CD4-positive, alpha-beta memory T cell (primary cell): ENCODE measurements at regions of chr6 and their contacts with region 1.

Region 1: DNA sequence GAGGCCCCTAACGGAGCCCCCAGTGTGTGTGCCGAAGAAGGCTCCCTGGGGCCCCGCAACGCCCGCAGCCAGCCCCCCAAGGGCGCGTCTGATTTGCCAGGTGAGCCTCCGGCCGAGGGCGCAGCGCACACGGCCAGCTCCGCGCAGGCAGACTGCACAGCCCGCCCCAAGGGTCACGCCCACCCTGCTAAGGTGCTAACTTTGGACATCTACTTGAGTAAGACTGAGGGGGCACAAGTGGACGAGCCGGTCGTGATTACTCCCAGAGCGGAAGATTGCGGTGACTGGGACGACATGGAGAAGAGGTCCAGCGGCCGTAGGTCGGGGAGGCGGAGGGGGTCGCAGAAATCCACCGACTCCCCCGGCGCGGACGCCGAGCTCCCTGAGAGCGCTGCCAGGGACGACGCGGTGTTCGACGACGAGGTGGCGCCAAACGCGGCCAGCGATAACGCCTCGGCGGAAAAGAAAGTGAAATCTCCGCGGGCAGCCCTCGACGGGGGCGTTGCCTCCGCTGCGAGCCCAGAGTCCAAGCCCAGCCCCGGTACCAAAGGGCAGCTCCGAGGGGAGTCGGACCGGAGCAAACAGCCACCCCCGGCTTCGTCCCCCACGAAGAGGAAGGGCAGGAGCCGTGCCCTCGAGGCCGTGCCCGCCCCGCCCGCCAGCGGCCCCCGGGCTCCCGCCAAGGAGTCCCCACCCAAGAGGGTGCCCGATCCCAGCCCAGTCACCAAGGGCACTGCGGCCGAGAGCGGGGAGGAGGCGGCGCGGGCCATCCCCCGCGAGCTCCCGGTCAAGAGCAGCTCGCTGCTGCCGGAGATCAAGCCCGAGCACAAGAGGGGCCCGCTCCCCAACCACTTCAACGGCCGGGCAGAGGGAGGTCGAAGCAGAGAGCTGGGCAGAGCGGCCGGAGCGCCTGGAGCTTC is 117.0 kb downstream of the RTN4IP1 start:
- DNase-seq: peak; percentile 77 to 84 (median 80)
- H3K4me3 ChIP-seq: peak overlapping the region; percentile 70 to 85
- H3K4me3 Mint-ChIP-seq: peak overlapping the region; percentile 93 to 96 (median 95)
- H3K27ac ChIP-seq: peak overlapping the region; percentile 98
- H3K27ac Mint-ChIP-seq: peak overlapping the region; percentile 92 to 98 (median 98)
- H3K4me1 ChIP-seq: peaks cover 51% of the 10 kb centered on the region
- H3K4me1 Mint-ChIP-seq: peaks cover 28 to 69% (median 47%) of the 10 kb centered on the region in 4 donors
- H3K27me3 ChIP-seq: no peaks in the 10 kb centered on the region
- H3K27me3 Mint-ChIP-seq: no peaks in the 10 kb centered on the region

Region 2: GRCh38 chr6:106325336-106326178 is 186.8 kb before region 1 on chr6 and contains the start of gene ATG5:
- CTCF ChIA-PET with region 1: interaction called, 3 read pairs
- POLR2A ChIA-PET with region 1: interaction called, 4 read pairs
- intact Hi-C with region 1: loop called (anchors 5 kb)
- DNase-seq: peak; percentile 99 to 100 (median 99)
- H3K4me3 ChIP-seq: peak within 1 kb of the TSS; percentile 87 to 97
- H3K4me3 Mint-ChIP-seq: peak within 1 kb of the TSS; percentile 94 to 100 (median 99)
- H3K27ac ChIP-seq: peak within 1 kb of the TSS; percentile 85
- H3K27ac Mint-ChIP-seq: peak within 1 kb of the TSS; percentile 96 to 99 (median 98)
- H3K4me1 ChIP-seq: peaks cover 33% of the 10 kb centered on the region
- H3K4me1 Mint-ChIP-seq: peaks cover 35 to 48% (median 44%) of the 10 kb centered on the region in 4 donors
- H3K27me3 ChIP-seq: no peaks in the 10 kb centered on the region
- H3K27me3 Mint-ChIP-seq: peaks cover 5 to 7% of the 10 kb centered on the region in 2 donors
- total RNA-seq, gene ATG5: 26.8 to 30.2 TPM

Region 3: DNA sequence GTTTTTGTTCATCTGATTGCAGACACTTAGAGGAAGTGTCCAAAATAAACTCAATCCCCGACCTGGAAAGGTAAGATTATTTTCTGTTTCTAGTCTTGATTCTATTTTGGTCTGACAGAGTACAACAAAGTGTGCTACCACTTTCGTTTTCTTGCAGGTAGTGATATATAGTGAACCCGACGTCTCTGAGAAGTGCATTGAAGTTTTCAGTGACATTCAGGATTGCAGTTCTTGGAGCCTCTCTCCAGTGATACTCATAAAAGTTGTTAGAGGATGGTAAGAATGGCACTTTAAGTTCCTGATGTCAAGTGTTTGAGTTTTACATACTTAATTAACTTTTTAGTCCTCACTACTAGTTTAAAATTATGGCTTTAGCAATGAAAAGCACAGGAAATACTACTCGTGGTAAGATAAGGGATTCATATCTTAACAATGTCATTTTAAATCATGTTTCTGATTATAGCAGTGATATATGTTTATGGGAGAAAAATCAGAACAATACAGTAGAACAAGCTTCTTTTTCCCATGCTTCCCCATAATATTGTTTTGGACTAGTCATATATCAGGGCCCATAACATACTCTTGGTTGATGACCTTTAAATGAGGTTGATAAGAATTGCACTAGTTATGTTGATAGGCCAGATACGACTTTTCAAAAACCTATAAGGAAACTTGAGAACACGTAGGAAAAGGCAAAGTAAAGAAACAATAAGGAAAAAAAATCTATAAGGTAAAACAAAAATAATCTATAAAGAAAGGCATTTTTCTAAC is 13.0 kb after region 1 on chr6:
- CTCF ChIA-PET with region 1: interaction called, 170 read pairs
- POLR2A ChIA-PET with region 1: interaction called, 346 read pairs
- intact Hi-C with region 1: loop called (anchors 1 kb)
- DNase-seq: peak in 4 of 5 donors; percentile 49 to 57 (median 53)
- H3K4me3 ChIP-seq: peak overlapping the region; percentile 13 to 58
- H3K4me3 Mint-ChIP-seq: peak overlapping the region; percentile 85 to 97 (median 92)
- H3K27ac ChIP-seq: peak overlapping the region; percentile 79
- H3K27ac Mint-ChIP-seq: peak overlapping the region; percentile 86 to 96 (median 94)
- H3K4me1 ChIP-seq: peaks cover 58% of the 10 kb centered on the region
- H3K4me1 Mint-ChIP-seq: peaks cover 26 to 81% (median 40%) of the 10 kb centered on the region in 4 donors
- H3K27me3 ChIP-seq: no peaks in the 10 kb centered on the region
- H3K27me3 Mint-ChIP-seq: no peaks in the 10 kb centered on the region

Region 4: GRCh38 chr6:106539936-106540335 is 27.6 kb after region 1 on chr6:
- CTCF ChIA-PET with region 1: interaction called, 69 read pairs
- POLR2A ChIA-PET with region 1: interaction called, 97 read pairs
- intact Hi-C with region 1: loop called (anchors 1 kb)
- DNase-seq: no peak
- H3K4me3 ChIP-seq: no peak overlapping the region
- H3K4me3 Mint-ChIP-seq: peak overlapping the region in 1 of 8 donors; percentile 4
- H3K27ac ChIP-seq: no peak overlapping the region
- H3K27ac Mint-ChIP-seq: peak overlapping the region in 6 of 7 donors; percentile 48 to 85 (median 78)
- H3K4me1 ChIP-seq: peaks cover 41% of the 10 kb centered on the region
- H3K4me1 Mint-ChIP-seq: peaks cover 41 to 58% (median 50%) of the 10 kb centered on the region in 4 donors
- H3K27me3 ChIP-seq: no peaks in the 10 kb centered on the region
- H3K27me3 Mint-ChIP-seq: no peaks in the 10 kb centered on the region

Region 5: DNA sequence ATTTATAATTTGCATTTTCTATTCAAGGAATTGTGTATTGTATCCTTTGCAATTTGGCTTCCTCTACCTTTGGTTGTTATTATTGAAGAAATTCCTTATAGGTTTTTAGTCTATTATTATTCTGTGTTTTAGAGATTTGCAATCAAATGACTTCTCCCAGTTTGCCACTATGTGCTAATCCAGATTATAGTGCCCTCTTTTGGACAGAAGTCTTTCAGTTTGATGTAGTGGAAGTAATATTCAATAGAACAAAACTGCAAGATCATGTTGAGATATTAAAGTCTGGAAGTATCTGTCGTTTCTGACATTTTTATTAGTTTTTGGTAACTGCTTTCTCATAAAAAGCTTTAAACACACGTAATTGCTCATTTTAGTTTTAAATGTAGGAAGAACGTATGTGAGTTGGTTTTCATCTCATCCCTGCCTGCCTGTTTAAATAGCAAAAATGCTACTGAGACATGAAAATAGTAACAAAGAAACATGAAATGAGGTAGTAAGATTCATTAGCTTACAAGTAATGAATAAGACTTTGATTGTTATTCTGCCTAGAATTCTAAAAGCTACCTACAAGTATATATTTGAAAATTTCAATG is 44.2 kb after region 1 on chr6:
- CTCF ChIA-PET with region 1: interaction called, 163 read pairs
- POLR2A ChIA-PET with region 1: interaction called, 22 read pairs
- intact Hi-C with region 1: loop called (anchors 1 kb)
- DNase-seq: peak in 4 of 5 donors; percentile 43 to 46 (median 45)
- H3K4me3 ChIP-seq: no peak overlapping the region
- H3K4me3 Mint-ChIP-seq: no peak overlapping the region
- H3K27ac ChIP-seq: no peak overlapping the region
- H3K27ac Mint-ChIP-seq: peak overlapping the region in 3 of 7 donors; percentile 2 to 75 (median 68)
- H3K4me1 ChIP-seq: no peaks in the 10 kb centered on the region
- H3K4me1 Mint-ChIP-seq: peaks cover 4 to 9% (median 7%) of the 10 kb centered on the region in 4 donors
- H3K27me3 ChIP-seq: no peaks in the 10 kb centered on the region
- H3K27me3 Mint-ChIP-seq: no peaks in the 10 kb centered on the region

Region 6: DNA sequence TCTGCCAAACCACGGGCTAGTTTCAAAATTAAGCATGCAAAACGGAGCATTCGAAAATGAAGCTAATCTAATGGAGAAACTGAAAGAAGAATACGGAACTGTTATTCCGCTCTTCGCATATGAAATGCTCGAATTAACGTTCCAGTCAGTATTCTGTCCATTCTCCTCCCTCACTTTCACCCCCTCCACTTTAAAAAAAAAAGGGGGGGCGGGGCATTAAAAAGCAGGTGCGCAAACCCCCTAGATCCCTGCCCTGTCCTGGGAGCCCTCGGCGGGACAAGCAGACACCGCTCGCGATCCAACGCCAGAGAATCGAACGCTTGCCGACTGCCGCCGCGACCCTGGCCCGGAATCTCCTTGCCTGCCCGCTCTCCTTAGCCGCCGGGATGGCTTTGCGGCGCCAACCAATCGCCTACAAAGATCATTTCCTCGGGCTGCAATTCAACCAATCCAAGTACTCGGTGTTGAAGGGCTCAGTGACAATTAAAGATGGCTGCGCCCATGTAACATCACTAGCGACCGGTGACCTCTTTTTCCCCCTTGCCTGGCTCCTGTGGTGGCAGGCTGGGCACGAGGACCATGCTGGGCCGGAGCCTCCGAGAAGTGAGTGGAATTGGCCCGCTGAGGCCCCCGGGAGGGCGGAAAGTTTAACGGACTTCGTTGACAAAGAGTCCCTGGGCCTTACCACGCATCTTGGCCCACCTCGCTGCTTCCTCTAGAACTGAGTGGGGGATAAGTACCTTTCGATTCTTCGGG is 117.0 kb after region 1 on chr6 and contains the starts of genes QRSL1 and RTN4IP1:
- CTCF ChIA-PET with region 1: no interaction called
- POLR2A ChIA-PET with region 1: interaction called, 3 read pairs
- intact Hi-C with region 1: loop called (anchors 2 kb)
- DNase-seq: peak; percentile 91 to 93 (median 92)
- H3K4me3 ChIP-seq: peak within 1 kb of the TSS; percentile 85 to 88
- H3K4me3 Mint-ChIP-seq: peak within 1 kb of the TSS; percentile 96 to 99 (median 97)
- H3K27ac ChIP-seq: peak within 1 kb of the TSS; percentile 74
- H3K27ac Mint-ChIP-seq: peak within 1 kb of the TSS; percentile 96 to 98 (median 98)
- H3K4me1 ChIP-seq: peaks cover 23% of the 10 kb centered on the region
- H3K4me1 Mint-ChIP-seq: peaks cover 21 to 39% (median 31%) of the 10 kb centered on the region in 4 donors
- H3K27me3 ChIP-seq: no peaks in the 10 kb centered on the region
- H3K27me3 Mint-ChIP-seq: no peaks in the 10 kb centered on the region
- total RNA-seq, gene QRSL1: 12.3 to 13.4 TPM
- total RNA-seq, gene RTN4IP1: 5.8 to 8.3 TPM